Posterior cingulate gyrus (tissue), 11 donors: ENCODE measurements at regions of chr3 and their contacts with region 1.

Region 1: GRCh38 chr3:46909535-46910442 is 32.3 kb downstream of the PTH1R start:
- DNase-seq: peak; percentile 78 to 98 (median 89)

Region 2: GRCh38 chr3:46462111-46462510 is 447.7 kb before region 1 on chr3:
- intact Hi-C with region 1: no loop called
- DNase-seq: no peak

Region 3: DNA sequence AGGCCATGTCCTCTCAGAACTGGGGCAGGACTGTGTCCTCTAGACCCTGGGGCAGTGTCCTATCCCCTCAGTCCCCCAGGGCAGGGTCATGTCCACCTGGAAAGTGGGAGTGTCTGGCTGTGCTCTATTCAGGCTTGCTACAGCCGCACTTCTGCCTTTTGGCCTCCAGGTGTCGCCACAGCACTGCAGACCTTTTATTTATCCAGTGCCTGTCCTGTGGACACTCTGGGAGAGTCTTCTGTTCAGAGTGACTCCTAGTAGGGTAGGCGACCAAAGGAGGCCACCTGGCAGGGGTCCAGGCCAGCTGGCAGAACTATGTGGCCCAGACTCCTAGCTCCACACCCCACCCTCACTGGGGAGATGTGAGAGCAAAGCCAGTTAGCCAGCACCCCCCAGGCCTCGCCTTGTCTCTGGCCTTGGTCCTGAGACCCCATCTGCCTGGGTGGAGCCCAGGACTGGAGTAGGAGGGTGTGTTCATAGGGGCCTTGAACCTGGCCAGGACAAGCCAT is 204.7 kb before region 1 on chr3:
- intact Hi-C with region 1: loop called (anchors 1 kb)
- DNase-seq: peak; percentile 62 to 97 (median 78)

Region 4: DNA sequence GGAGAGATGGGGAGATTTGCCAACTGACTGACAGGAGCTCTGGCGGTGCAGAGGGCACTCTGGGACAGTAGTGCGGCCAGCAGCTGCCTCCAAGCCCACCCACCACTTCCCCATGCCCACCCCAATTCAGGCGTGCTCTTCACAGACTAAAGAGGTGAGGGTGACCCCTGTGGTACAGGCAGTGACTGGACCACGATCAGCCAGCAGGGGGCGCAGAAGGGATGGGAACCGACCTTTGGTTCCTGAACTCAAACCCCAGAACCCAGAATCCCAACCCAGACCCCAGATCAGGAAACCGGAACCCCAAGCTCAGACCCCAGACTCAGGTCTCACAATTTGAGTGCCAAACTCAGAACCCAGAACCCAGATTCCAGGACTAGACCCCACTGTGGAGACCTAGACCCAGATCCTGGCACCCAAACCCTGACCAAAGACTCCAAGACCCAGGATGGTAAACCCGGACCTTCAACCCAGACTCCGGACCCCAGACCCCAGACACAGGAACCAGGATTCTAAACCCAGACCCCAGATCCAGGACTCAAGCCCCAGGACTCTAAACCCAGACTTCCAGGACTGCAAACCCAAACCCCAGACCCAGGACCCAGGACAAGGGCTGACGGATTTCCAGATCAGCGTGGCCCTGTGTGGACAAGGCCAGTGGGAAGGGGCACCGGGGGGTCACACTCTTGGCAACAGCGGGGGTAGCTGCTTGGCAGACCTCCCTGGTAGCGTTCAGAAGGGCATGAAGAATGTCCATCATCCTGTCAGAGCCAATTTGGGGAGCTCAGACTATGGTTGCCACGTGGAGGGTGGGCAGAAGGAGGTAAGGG is 42.9 kb before region 1 on chr3:
- intact Hi-C with region 1: loop called (anchors 1 kb)
- DNase-seq: peak; percentile 47 to 96 (median 86)